Activated B cell treated with CpG ODN at 0.5 μM for 24 hours (primary cell): ENCODE measurements at regions of chr7 and their contacts with region 1.

Region 1: DNA sequence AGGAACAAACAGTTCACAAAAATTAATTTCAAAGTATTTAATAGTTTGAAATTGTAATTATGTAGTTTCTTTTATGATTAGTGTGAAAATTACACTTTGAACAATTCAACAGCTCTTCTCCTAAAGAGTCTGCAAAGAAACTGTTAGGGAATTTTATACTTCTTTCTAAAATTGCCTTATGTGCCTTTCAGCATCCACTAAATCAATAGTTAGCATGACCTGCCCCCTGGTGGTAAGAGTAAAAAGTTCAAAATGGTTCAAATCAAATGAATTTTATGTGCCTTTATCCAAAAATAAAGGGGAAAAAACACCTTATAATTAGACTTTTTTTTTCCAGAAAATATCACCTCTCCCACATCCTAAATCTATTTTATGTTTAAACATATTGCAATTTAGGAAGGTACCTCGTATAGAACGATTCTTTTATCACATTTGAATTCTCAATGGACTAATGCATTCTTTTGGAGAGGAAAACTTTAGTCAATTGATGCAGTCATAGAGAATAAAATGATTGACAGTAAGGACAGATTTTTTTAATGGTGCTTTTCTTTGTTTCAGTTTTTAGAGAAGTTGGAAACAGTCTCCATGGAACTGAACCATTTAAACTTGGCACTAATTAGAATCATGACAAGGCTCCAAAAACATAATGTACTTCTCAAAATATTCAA is 163.7 kb downstream of the SEMA3D start:
- DNase-seq: no peak
- ATAC-seq: no peak
- H3K4me3 Mint-ChIP-seq: no peak overlapping the region
- H3K27ac Mint-ChIP-seq: no peak overlapping the region
- H3K4me1 Mint-ChIP-seq: no peaks in the 10 kb centered on the region
- H3K27me3 Mint-ChIP-seq: no peaks in the 10 kb centered on the region
- CTCF ChIP-seq: peak; percentile 47

Region 2: GRCh38 chr7:83410989-83411591 is 1612.1 kb before region 1 on chr7:
- CTCF ChIA-PET with region 1: no interaction called
- POLR2A ChIA-PET with region 1: no interaction called
- intact Hi-C with region 1: loop called (anchors 2 kb)
- DNase-seq: no peak
- ATAC-seq: no peak
- H3K4me3 Mint-ChIP-seq: no peak overlapping the region
- H3K27ac Mint-ChIP-seq: no peak overlapping the region
- H3K4me1 Mint-ChIP-seq: no peaks in the 10 kb centered on the region
- H3K27me3 Mint-ChIP-seq: no peaks in the 10 kb centered on the region
- CTCF ChIP-seq: no peak

Region 3: GRCh38 chr7:83936056-83936708 is 1087.0 kb before region 1 on chr7:
- CTCF ChIA-PET with region 1: interaction called, 5 read pairs
- POLR2A ChIA-PET with region 1: no interaction called
- intact Hi-C with region 1: loop called (anchors 1 kb)
- DNase-seq: no peak
- ATAC-seq: peak; percentile 42
- H3K4me3 Mint-ChIP-seq: no peak overlapping the region
- H3K27ac Mint-ChIP-seq: no peak overlapping the region
- H3K4me1 Mint-ChIP-seq: no peaks in the 10 kb centered on the region
- H3K27me3 Mint-ChIP-seq: no peaks in the 10 kb centered on the region
- CTCF ChIP-seq: no peak

Region 4: GRCh38 chr7:83976295-83976694 is 1046.9 kb before region 1 on chr7:
- CTCF ChIA-PET with region 1: no interaction called
- POLR2A ChIA-PET with region 1: no interaction called
- intact Hi-C with region 1: loop called (anchors 1 kb)
- DNase-seq: no peak
- ATAC-seq: no peak
- H3K4me3 Mint-ChIP-seq: no peak overlapping the region
- H3K27ac Mint-ChIP-seq: no peak overlapping the region
- H3K4me1 Mint-ChIP-seq: no peaks in the 10 kb centered on the region
- H3K27me3 Mint-ChIP-seq: no peaks in the 10 kb centered on the region
- CTCF ChIP-seq: no peak

Region 5: GRCh38 chr7:84149573-84149972 is 873.6 kb before region 1 on chr7:
- CTCF ChIA-PET with region 1: no interaction called
- POLR2A ChIA-PET with region 1: no interaction called
- intact Hi-C with region 1: no loop called
- DNase-seq: no peak
- ATAC-seq: no peak
- H3K4me3 Mint-ChIP-seq: no peak overlapping the region
- H3K27ac Mint-ChIP-seq: no peak overlapping the region
- H3K4me1 Mint-ChIP-seq: no peaks in the 10 kb centered on the region
- H3K27me3 Mint-ChIP-seq: no peaks in the 10 kb centered on the region
- CTCF ChIP-seq: no peak